Esophagus muscularis mucosa (tissue), 4 donors: ENCODE measurements at regions of chr2 and their contacts with region 1.

Region 1: DNA sequence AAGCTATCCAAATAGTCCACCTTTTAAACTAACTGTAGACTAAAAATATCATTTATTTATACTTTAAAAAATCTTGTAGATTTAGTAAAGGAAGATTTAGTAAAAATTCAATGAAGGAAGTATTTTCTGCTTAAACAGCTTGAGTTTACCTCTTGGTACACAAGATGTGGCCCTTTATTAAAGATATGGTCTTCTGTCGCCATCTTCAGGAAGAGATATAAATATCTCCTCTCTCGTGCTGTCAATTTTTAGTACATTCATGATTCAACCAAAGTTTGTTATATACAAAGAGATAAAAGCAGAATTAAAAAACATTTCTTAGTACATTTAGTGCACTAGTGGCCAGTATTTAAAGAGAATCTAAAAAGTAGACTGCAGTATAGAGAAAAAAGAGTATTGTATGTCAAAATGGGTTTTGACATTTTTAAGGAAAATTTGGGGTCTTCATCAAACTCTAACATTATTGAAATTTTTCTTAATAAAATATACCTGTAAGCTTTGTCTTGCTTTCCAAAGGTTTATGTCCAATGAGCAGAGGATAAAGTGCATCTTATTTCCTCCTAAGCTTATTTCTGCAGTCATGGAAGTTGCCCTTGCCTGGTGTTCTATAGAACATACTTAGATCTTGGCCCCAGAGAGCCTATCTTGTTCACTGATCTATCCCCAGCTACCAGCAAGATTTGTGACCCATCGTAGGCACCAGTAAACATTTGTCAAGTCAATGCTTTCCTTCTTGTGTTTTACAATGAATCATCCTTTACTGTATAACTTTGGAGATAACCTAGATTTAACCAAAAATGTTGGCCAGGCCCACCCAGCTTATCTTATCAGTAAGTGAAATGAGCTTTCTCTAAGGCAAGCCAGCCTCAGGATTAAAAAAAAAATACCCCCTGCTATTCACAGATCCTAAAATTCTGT is 18.5 kb upstream of the EML6 start:
- DNase-seq: no peak
- H3K4me3 ChIP-seq: no peak overlapping the region
- H3K27ac ChIP-seq: no peak overlapping the region
- H3K4me1 ChIP-seq: peaks cover 0 to 20% (median 14%) of the 10 kb centered on the region in 4 donors
- H3K27me3 ChIP-seq: peaks cover 0 to 13% (median 0%) of the 10 kb centered on the region in 4 donors
- CTCF ChIP-seq: peak; percentile 60 to 82 (median 71)
- EP300 ChIP-seq: no peak
- POLR2A ChIP-seq: no peak

Region 2: GRCh38 chr2:54161660-54162424 is 543.1 kb before region 1 on chr2:
- intact Hi-C with region 1: loop called (anchors 10 kb)
- DNase-seq: no peak
- H3K4me3 ChIP-seq: no peak overlapping the region
- H3K27ac ChIP-seq: peak overlapping the region; percentile 31 to 49 (median 32)
- H3K4me1 ChIP-seq: peaks cover 0 to 15% (median 10%) of the 10 kb centered on the region in 4 donors
- H3K27me3 ChIP-seq: no peaks in the 10 kb centered on the region
- CTCF ChIP-seq: peak in 2 of 3 experiments; percentile 33
- EP300 ChIP-seq: no peak
- POLR2A ChIP-seq: no peak

Region 3: GRCh38 chr2:54330162-54330925 is 374.6 kb before region 1 on chr2:
- intact Hi-C with region 1: loop called (anchors 5 kb)
- DNase-seq: peak; percentile 98
- H3K4me3 ChIP-seq: peak overlapping the region; percentile 57 to 75 (median 68)
- H3K27ac ChIP-seq: peak overlapping the region; percentile 83 to 97 (median 92)
- H3K4me1 ChIP-seq: peaks cover 15 to 21% (median 19%) of the 10 kb centered on the region in 4 donors
- H3K27me3 ChIP-seq: no peaks in the 10 kb centered on the region
- CTCF ChIP-seq: no peak
- EP300 ChIP-seq: no peak
- POLR2A ChIP-seq: peak; percentile 83

Region 4: GRCh38 chr2:54522624-54523281 is 182.2 kb before region 1 on chr2:
- intact Hi-C with region 1: loop called (anchors 5 kb)
- DNase-seq: no peak
- H3K4me3 ChIP-seq: no peak overlapping the region
- H3K27ac ChIP-seq: no peak overlapping the region
- H3K4me1 ChIP-seq: peaks cover 85 to 91% (median 88%) of the 10 kb centered on the region in 4 donors
- H3K27me3 ChIP-seq: no peaks in the 10 kb centered on the region
- CTCF ChIP-seq: peak; percentile 52 to 61 (median 58)
- EP300 ChIP-seq: no peak
- POLR2A ChIP-seq: no peak

Region 5: GRCh38 chr2:54657664-54658083 is 47.3 kb before region 1 on chr2:
- intact Hi-C with region 1: loop called (anchors 2 kb)
- DNase-seq: no peak
- H3K4me3 ChIP-seq: no peak overlapping the region
- H3K27ac ChIP-seq: peak overlapping the region in 3 of 4 donors; percentile 18 to 32 (median 25)
- H3K4me1 ChIP-seq: peaks cover 13 to 27% (median 21%) of the 10 kb centered on the region in 4 donors
- H3K27me3 ChIP-seq: no peaks in the 10 kb centered on the region
- CTCF ChIP-seq: peak; percentile 50 to 60 (median 53)
- EP300 ChIP-seq: no peak
- POLR2A ChIP-seq: no peak